ENCODE measurements at regions of chr7 and their contacts with region 1.

Region 1: GRCh38 chr7:63012633-63013183 is 985.9 kb upstream of the ZNF722 start:
- DNase-seq: no peak
- ATAC-seq: no peak

Region 2: GRCh38 chr7:64625114-64626082 is 1612.7 kb after region 1 on chr7:
- intact Hi-C with region 1: loop called (anchors 10 kb)
- DNase-seq: no peak
- ATAC-seq: no peak